ENCODE measurements at regions of chr1 and their contacts with region 1.

Region 1: DNA sequence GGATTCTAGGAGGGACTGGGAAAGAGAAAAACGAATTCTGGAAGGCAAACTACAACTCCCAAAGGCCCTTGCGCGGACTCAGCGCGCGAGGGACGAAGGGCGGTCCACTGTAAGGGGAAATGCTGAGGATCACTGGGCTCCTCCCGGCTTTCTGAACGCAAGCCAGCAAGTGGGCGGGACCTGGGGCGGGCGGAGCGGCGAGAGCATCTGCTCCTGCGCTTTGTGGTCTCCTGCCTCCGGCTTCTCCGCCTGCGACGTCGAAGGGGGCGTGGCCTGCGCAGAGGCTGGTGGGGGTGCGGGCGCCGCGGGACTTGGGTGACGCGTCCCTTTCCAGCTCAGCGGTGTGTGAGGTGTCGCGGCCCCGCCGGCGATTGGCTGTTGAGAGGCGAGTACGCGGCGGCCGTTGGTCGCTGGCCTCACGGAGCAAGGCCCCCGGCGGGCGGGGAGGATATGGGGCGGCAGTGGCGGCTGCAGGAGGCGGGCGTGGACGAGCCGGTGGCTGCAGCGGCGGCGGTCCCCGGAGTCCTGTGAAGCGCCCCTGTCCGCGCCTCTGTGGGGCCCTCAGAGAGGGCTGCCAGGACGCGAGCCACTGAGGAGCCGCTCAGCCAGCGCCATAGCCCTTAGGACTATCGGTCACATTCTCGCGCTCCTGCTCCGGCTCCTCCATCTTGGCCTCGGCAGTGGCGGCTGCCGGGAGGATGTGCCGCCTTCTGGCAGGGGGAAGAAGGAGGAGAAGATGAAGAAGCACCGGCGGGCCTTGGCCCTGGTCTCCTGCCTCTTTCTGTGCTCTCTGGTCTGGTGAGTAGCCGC is at the start of gene SUCO:
- DNase-seq: peak; percentile 97 to 100 (median 99)
- ATAC-seq: peak; percentile 90
- H3K4me3 ChIP-seq: peak within 1 kb of the TSS; percentile 98
- H3K4me3 Mint-ChIP-seq: peak within 1 kb of the TSS; percentile 90 to 100 (median 98)
- H3K27ac ChIP-seq: peak within 1 kb of the TSS; percentile 99
- H3K27ac Mint-ChIP-seq: peak within 1 kb of the TSS; percentile 99 to 100 (median 100)
- H3K4me1 ChIP-seq: peaks cover 30 to 34% of the 10 kb centered on the region in 2 donors
- H3K4me1 Mint-ChIP-seq: peaks cover 32 to 60% (median 49%) of the 10 kb centered on the region in 7 donors
- H3K27me3 ChIP-seq: no peaks in the 10 kb centered on the region
- H3K27me3 Mint-ChIP-seq: peaks cover 0 to 16% (median 4%) of the 10 kb centered on the region in 5 donors
- total RNA-seq, gene SUCO: 52.0 to 95.0 (median 77.0) TPM

Region 2: DNA sequence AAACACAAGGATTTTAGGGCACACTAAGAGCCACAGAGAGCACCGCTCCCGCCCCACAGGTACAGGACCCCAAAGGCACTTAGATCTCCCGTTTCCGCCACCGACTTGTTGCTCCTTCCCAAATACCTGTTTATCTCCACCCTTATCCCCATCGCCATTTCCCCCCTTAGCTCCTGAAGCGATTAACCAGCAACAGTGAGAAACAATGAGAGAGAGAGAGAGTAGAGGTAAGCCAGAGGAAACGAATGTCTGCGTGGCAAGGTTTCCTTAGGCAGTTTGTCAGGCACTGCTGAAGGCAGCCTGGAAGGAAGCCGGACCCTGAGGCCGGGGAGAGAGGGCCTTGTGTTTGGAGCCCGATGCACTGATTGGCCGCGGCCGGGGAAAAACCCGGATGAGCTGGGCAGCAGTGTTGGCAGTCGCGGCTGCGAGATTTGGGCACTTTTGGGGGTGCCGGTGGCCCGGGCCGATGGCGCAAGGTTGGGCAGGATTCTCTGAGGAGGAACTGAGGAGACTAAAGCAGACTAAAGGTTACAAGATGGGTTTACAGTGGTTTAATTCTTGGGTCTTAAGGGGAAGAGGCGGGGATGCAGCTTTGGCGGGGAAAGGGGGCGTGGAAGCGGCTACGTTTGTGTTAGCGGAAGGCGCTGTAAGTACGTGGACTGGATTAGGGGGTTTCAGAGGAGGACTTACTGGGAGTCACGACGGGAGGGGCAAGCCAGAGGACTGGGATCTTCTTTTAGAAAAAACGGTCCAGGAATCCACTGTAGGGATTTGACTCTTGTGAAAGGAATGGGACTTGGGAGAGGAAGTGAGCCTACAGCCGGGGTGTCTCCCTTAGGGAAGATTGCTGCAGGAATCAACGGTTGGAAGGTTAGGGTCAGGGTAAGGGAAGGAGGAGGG is 2000.9 kb before region 1 on chr1 and contains the start of gene GORAB:
- CTCF ChIA-PET with region 1: no interaction called
- POLR2A ChIA-PET with region 1: no interaction called
- intact Hi-C with region 1: loop called in 1 of 2 experiments (anchors 5 kb)
- DNase-seq: peak; percentile 74 to 87 (median 83)
- ATAC-seq: peak; percentile 97
- H3K4me3 ChIP-seq: peak within 1 kb of the TSS; percentile 95
- H3K4me3 Mint-ChIP-seq: no peak within 1 kb of the TSS
- H3K27ac ChIP-seq: peak within 1 kb of the TSS; percentile 91
- H3K27ac Mint-ChIP-seq: peak within 1 kb of the TSS in 1 of 9 donors; percentile 36
- H3K4me1 ChIP-seq: peaks cover 8 to 14% of the 10 kb centered on the region in 2 donors
- H3K4me1 Mint-ChIP-seq: peaks cover 7 to 29% (median 19%) of the 10 kb centered on the region in 7 donors
- H3K27me3 ChIP-seq: no peaks in the 10 kb centered on the region
- H3K27me3 Mint-ChIP-seq: peaks cover 0 to 20% (median 0%) of the 10 kb centered on the region in 5 donors
- total RNA-seq, gene GORAB: 10.9 to 25.3 (median 22.7) TPM

Region 3: DNA sequence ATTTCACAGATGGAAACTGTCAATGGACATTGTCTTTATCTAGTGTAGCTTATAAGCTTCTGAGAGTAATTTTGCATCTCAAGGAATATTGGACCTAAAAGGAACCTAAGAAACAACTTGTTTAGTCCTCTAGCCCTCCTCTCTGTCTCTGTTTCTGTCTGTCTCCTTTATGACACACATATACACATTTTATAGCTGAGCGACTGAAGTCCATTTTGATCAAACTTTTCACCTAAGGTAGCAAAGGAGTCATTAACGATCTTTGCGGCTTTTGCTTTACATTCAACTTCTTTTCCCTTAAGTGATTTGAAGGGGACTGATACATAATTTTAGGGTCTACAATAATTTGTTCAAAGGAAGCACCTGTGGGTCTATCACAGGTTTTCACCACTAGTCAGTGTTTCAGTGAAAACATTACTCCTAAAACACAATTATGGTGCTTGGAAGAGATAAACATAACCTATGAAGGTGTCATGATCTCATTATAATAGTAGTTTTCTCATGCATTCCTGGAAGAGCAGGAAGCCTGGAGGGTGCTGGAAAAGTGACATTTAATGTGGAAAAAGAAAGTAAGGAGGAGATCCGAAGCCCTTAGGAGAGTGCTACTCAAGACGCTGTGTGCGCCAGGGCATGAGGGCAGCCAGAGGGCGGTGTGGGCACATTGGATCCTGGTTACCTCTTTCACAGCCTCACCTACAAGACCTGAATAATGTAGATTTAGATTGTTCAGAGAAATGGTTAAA is 443.0 kb before region 1 on chr1:
- CTCF ChIA-PET with region 1: no interaction called
- POLR2A ChIA-PET with region 1: no interaction called
- intact Hi-C with region 1: loop called in 1 of 2 experiments (anchors 5 kb)
- DNase-seq: peak; percentile 25 to 61 (median 46)
- ATAC-seq: peak; percentile 86
- H3K4me3 ChIP-seq: no peak overlapping the region
- H3K4me3 Mint-ChIP-seq: peak overlapping the region in 3 of 10 donors; percentile 9 to 35 (median 24)
- H3K27ac ChIP-seq: no peak overlapping the region
- H3K27ac Mint-ChIP-seq: peak overlapping the region in 4 of 9 donors; percentile 1 to 72 (median 50)
- H3K4me1 ChIP-seq: no peaks in the 10 kb centered on the region
- H3K4me1 Mint-ChIP-seq: peaks cover 0 to 7% (median 6%) of the 10 kb centered on the region in 7 donors
- H3K27me3 ChIP-seq: no peaks in the 10 kb centered on the region
- H3K27me3 Mint-ChIP-seq: peaks cover 0 to 7% (median 0%) of the 10 kb centered on the region in 5 donors

Region 4: GRCh38 chr1:172443626-172444453 is 89.1 kb before region 1 on chr1 and contains the start of gene PIGC:
- CTCF ChIA-PET with region 1: interaction called, 7 read pairs
- POLR2A ChIA-PET with region 1: interaction called, 15 read pairs
- intact Hi-C with region 1: loop called in 1 of 2 experiments (anchors 1 kb)
- DNase-seq: peak; percentile 78 to 89 (median 87)
- ATAC-seq: peak; percentile 100
- H3K4me3 ChIP-seq: peak within 1 kb of the TSS; percentile 72
- H3K4me3 Mint-ChIP-seq: peak within 1 kb of the TSS; percentile 87 to 98 (median 94)
- H3K27ac ChIP-seq: peak within 1 kb of the TSS; percentile 83
- H3K27ac Mint-ChIP-seq: peak within 1 kb of the TSS; percentile 91 to 97 (median 93)
- H3K4me1 ChIP-seq: peaks cover 15 to 25% of the 10 kb centered on the region in 2 donors
- H3K4me1 Mint-ChIP-seq: peaks cover 27 to 53% (median 47%) of the 10 kb centered on the region in 7 donors
- H3K27me3 ChIP-seq: no peaks in the 10 kb centered on the region
- H3K27me3 Mint-ChIP-seq: no peaks in the 10 kb centered on the region
- total RNA-seq, gene PIGC: 21.1 to 57.4 (median 25.1) TPM

Region 5: DNA sequence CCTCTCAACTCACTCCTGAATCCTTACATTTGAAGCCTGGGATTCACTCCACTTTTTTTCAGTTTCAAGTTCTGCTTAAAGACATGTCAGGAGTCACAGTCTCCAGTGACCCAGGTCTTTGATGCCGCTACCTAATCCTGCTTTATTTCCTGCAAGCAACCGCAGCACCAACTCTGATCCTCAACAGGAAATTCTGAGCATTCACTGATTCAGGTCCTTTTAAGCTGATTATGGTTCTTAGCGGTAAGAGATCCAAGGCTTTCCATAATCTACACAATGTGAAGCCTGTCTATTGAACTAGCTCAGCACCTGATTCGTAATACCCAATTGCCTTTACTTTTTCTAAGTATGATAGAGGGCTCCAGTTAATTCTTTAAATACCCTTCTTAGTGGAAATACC is 45.4 kb before region 1 on chr1:
- CTCF ChIA-PET with region 1: no interaction called
- POLR2A ChIA-PET with region 1: no interaction called
- intact Hi-C with region 1: no loop called
- DNase-seq: peak in 1 of 9 donors; percentile 12
- ATAC-seq: no peak
- H3K4me3 ChIP-seq: no peak overlapping the region
- H3K4me3 Mint-ChIP-seq: peak overlapping the region in 5 of 10 donors; percentile 8 to 59 (median 41)
- H3K27ac ChIP-seq: no peak overlapping the region
- H3K27ac Mint-ChIP-seq: no peak overlapping the region
- H3K4me1 ChIP-seq: peaks cover 0 to 12% of the 10 kb centered on the region in 2 donors
- H3K4me1 Mint-ChIP-seq: peaks cover 9 to 26% (median 19%) of the 10 kb centered on the region in 7 donors
- H3K27me3 ChIP-seq: no peaks in the 10 kb centered on the region
- H3K27me3 Mint-ChIP-seq: peaks cover 4 to 35% (median 9%) of the 10 kb centered on the region in 5 donors

Region 6: DNA sequence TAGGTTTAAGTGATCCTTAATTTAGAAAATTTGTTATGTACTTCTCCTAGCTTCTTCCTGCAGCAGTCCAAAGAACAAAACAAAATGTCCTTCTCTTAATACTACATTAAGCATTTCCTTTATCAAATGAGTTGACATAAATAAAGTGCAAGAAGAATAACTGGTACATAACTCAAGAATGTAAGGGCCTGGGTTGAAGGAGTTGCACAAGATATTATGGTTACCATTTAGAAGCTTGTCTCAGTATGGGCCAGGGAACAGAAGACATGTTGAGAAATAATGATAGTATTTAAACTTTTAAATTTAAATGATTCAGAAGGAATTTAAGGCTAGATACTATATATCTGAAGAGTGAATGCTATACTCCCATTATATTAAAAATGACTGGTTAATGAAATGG is 23.6 kb after region 1 on chr1:
- CTCF ChIA-PET with region 1: no interaction called
- POLR2A ChIA-PET with region 1: no interaction called
- intact Hi-C with region 1: no loop called
- DNase-seq: no peak
- ATAC-seq: no peak
- H3K4me3 ChIP-seq: no peak overlapping the region
- H3K4me3 Mint-ChIP-seq: no peak overlapping the region
- H3K27ac ChIP-seq: no peak overlapping the region
- H3K27ac Mint-ChIP-seq: peak overlapping the region in 1 of 9 donors; percentile 17
- H3K4me1 ChIP-seq: no peaks in the 10 kb centered on the region
- H3K4me1 Mint-ChIP-seq: peaks cover 10 to 27% (median 21%) of the 10 kb centered on the region in 7 donors
- H3K27me3 ChIP-seq: no peaks in the 10 kb centered on the region
- H3K27me3 Mint-ChIP-seq: no peaks in the 10 kb centered on the region

Region 7: DNA sequence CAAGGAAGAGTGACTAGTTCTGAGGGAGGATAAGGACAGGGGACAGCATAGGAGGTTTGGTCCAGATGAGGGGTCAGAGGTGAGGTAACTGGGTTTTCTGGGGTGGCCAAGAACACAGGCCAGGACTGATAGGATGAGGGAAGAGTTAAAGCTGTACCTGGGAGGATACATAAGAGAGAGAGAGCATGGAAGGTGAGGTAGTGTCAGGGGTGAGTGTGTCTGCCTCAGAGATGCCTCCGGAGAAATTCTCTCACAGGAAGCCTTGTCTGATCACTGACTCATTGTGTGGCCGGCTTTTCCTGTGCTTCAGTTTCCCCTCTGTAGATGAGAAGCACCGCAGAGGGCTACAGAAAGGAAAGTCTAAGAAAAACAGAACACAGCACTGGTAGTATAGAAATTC is 166.2 kb after region 1 on chr1:
- CTCF ChIA-PET with region 1: no interaction called
- POLR2A ChIA-PET with region 1: no interaction called
- intact Hi-C with region 1: loop called in 1 of 2 experiments (anchors 1 kb)
- DNase-seq: peak; percentile 13 to 76 (median 65)
- ATAC-seq: peak; percentile 92
- H3K4me3 ChIP-seq: peak overlapping the region; percentile 37
- H3K4me3 Mint-ChIP-seq: peak overlapping the region; percentile 61 to 81 (median 76)
- H3K27ac ChIP-seq: peak overlapping the region; percentile 44
- H3K27ac Mint-ChIP-seq: peak overlapping the region in 7 of 9 donors; percentile 87 to 98 (median 92)
- H3K4me1 ChIP-seq: peaks cover 77 to 80% of the 10 kb centered on the region in 2 donors
- H3K4me1 Mint-ChIP-seq: peaks cover 0 to 53% (median 0%) of the 10 kb centered on the region in 7 donors
- H3K27me3 ChIP-seq: no peaks in the 10 kb centered on the region
- H3K27me3 Mint-ChIP-seq: no peaks in the 10 kb centered on the region

Region 8: DNA sequence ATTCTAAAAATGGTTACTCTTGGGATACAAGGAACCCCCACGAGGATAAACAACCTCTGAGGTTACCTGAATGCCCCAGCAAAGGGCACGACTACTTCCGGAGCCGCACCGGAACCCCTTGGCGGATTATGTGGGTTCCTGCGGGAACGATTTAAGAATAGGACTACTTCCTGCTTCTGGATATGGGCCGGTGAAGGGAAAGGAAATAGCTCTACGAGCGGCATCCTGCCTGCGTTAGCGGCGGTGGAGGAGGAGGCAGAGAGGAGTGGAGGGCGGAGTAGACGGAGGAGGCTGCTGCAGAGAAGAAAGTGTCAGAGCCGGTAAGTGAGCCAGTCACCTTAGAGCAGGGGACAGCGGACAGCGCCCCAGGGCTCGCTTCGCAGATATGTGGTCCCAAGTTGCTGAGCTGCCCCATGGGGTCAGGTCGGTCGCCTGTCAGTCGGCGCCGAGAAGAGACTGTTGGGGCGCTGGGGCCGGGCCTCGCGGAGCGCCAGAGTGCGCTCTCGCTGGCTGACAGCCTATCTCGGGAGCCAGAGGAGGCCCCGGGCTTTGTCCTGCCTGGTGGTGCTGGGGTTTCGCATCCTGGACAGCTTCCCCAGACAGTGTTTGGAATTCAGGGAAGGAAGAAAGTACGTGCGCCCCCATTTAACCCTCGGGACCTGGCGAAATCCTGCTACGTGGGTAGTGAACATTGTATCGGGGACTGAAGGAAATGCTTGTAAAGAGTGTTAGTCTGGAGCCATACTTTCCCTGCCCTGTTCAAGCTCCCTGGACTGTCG is 1182.0 kb after region 1 on chr1 and contains the start of gene KLHL20:
- CTCF ChIA-PET with region 1: no interaction called
- POLR2A ChIA-PET with region 1: no interaction called
- intact Hi-C with region 1: loop called (anchors 1 kb)
- DNase-seq: peak; percentile 60 to 92 (median 89)
- ATAC-seq: peak; percentile 98
- H3K4me3 ChIP-seq: peak within 1 kb of the TSS; percentile 77
- H3K4me3 Mint-ChIP-seq: peak within 1 kb of the TSS; percentile 90 to 100 (median 96)
- H3K27ac ChIP-seq: peak within 1 kb of the TSS; percentile 78
- H3K27ac Mint-ChIP-seq: peak within 1 kb of the TSS; percentile 89 to 99 (median 94)
- H3K4me1 ChIP-seq: peaks cover 11 to 18% of the 10 kb centered on the region in 2 donors
- H3K4me1 Mint-ChIP-seq: peaks cover 14 to 48% (median 35%) of the 10 kb centered on the region in 7 donors
- H3K27me3 ChIP-seq: no peaks in the 10 kb centered on the region
- H3K27me3 Mint-ChIP-seq: peaks cover 14 to 32% (median 19%) of the 10 kb centered on the region in 5 donors
- total RNA-seq, gene KLHL20: 28.3 to 40.9 (median 32.8) TPM